ENCODE measurements at regions of chr17 and their contacts with region 1.

Region 1: GRCh38 chr17:36534840-36535668 is at the starts of genes MYO19 and PIGW:
- DNase-seq: peak; percentile 88
- ATAC-seq: peak; percentile 82
- H3K4me3 Mint-ChIP-seq: peak within 1 kb of the TSS; percentile 98
- H3K27ac Mint-ChIP-seq: peak within 1 kb of the TSS; percentile 100
- H3K4me1 Mint-ChIP-seq: peaks cover 20% of the 10 kb centered on the region
- H3K27me3 Mint-ChIP-seq: no peaks in the 10 kb centered on the region
- CTCF ChIP-seq: no peak
- total RNA-seq, gene MYO19: 70.8 and 85.6 TPM in 2 replicates
- total RNA-seq, gene PIGW: 18.2 and 20.7 TPM in 2 replicates

Region 2: GRCh38 chr17:35947156-35947585 is 587.9 kb before region 1 on chr17:
- CTCF ChIA-PET with region 1: no interaction called
- POLR2A ChIA-PET with region 1: no interaction called
- intact Hi-C with region 1: loop called (anchors 5 kb)
- DNase-seq: peak; percentile 32
- ATAC-seq: peak; percentile 98
- H3K4me3 Mint-ChIP-seq: no peak overlapping the region
- H3K27ac Mint-ChIP-seq: no peak overlapping the region
- H3K4me1 Mint-ChIP-seq: no peaks in the 10 kb centered on the region
- H3K27me3 Mint-ChIP-seq: peaks cover 2% of the 10 kb centered on the region
- CTCF ChIP-seq: no peak

Region 3: DNA sequence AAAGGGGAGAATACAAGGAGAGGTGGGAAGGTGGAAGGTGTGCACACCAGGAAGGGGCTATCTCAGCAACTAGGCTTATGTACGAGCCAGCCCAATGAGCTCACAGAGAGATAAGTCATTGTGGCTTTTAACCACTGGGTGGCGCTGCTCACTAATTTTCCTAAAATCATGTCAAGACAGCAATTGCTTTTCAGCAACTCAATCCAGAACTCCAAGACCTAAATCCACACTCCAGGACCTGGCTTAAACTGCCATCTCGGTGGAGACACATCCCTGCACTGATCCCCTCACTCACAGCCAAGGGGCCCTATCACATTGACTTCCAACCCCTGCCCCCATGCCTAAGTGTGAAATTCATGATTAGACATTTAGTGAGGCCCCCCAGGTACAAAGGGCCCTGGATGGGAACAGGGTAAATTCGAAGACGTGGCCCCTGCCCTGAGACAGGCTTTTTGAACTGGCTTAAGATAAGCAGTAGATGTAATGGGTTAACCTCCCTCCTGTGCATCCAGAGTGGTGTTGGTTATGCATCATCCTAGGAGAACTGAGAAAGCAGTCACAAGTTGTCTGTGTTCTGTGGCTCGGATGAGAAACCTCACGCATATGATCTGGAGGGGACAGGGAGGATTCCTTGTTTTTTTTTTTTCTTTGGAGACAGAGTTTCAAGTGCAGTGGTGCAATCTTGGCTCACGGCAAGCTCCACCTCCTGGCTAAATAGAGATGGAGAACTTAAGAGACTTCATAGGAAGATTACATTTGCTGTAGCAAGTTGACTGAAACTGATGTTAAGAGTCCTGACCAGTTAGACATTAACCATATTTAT is 565.3 kb before region 1 on chr17:
- CTCF ChIA-PET with region 1: no interaction called
- POLR2A ChIA-PET with region 1: interaction called, 3 read pairs
- intact Hi-C with region 1: loop called (anchors 1 kb)
- DNase-seq: peak; percentile 49
- ATAC-seq: peak; percentile 84
- H3K4me3 Mint-ChIP-seq: no peak overlapping the region
- H3K27ac Mint-ChIP-seq: no peak overlapping the region
- H3K4me1 Mint-ChIP-seq: peaks cover 1% of the 10 kb centered on the region
- H3K27me3 Mint-ChIP-seq: peaks cover 5% of the 10 kb centered on the region
- CTCF ChIP-seq: peak; percentile 62

Region 4: GRCh38 chr17:36591434-36592315 is 56.6 kb after region 1 on chr17 and contains the start of gene DHRS11:
- CTCF ChIA-PET with region 1: no interaction called
- POLR2A ChIA-PET with region 1: interaction called, 3 read pairs
- intact Hi-C with region 1: loop called (anchors 1 kb)
- DNase-seq: peak; percentile 76
- ATAC-seq: peak; percentile 96
- H3K4me3 Mint-ChIP-seq: peak within 1 kb of the TSS; percentile 78
- H3K27ac Mint-ChIP-seq: peak within 1 kb of the TSS; percentile 46
- H3K4me1 Mint-ChIP-seq: peaks cover 13% of the 10 kb centered on the region
- H3K27me3 Mint-ChIP-seq: no peaks in the 10 kb centered on the region
- CTCF ChIP-seq: no peak
- total RNA-seq, gene DHRS11: 5.7 and 7.7 TPM in 2 replicates